Activated CD4-positive, alpha-beta memory T cell treated with anti-CD3 and anti-CD28 coated beads, Interleukin-2, amount 10 ng/mL, durations not matched to agents 7 days and 5 days (primary cell): ENCODE measurements at regions of chr12 and their contacts with region 1.

Region 1: GRCh38 chr12:89542912-89543592 is 17.2 kb upstream of the POC1B start:
- DNase-seq: peak; percentile 66
- H3K4me3 Mint-ChIP-seq: no peak overlapping the region
- H3K27ac Mint-ChIP-seq: no peak overlapping the region
- H3K4me1 Mint-ChIP-seq: peaks cover 9% of the 10 kb centered on the region
- H3K27me3 Mint-ChIP-seq: no peaks in the 10 kb centered on the region

Region 2: GRCh38 chr12:89610366-89610765 is 67.3 kb after region 1 on chr12:
- CTCF ChIA-PET with region 1: no interaction called
- POLR2A ChIA-PET with region 1: no interaction called
- DNase-seq: no peak
- H3K4me3 Mint-ChIP-seq: no peak overlapping the region
- H3K27ac Mint-ChIP-seq: no peak overlapping the region
- H3K4me1 Mint-ChIP-seq: no peaks in the 10 kb centered on the region
- H3K27me3 Mint-ChIP-seq: no peaks in the 10 kb centered on the region

Region 3: GRCh38 chr12:90102957-90103652 is 560.1 kb after region 1 on chr12:
- CTCF ChIA-PET with region 1: interaction called, 21 read pairs
- POLR2A ChIA-PET with region 1: no interaction called
- DNase-seq: no peak
- H3K4me3 Mint-ChIP-seq: peak overlapping the region; percentile 37
- H3K27ac Mint-ChIP-seq: no peak overlapping the region
- H3K4me1 Mint-ChIP-seq: peaks cover 9% of the 10 kb centered on the region
- H3K27me3 Mint-ChIP-seq: peaks cover 2% of the 10 kb centered on the region